ENCODE measurements at regions of chr5 and their contacts with region 1.

Region 1: DNA sequence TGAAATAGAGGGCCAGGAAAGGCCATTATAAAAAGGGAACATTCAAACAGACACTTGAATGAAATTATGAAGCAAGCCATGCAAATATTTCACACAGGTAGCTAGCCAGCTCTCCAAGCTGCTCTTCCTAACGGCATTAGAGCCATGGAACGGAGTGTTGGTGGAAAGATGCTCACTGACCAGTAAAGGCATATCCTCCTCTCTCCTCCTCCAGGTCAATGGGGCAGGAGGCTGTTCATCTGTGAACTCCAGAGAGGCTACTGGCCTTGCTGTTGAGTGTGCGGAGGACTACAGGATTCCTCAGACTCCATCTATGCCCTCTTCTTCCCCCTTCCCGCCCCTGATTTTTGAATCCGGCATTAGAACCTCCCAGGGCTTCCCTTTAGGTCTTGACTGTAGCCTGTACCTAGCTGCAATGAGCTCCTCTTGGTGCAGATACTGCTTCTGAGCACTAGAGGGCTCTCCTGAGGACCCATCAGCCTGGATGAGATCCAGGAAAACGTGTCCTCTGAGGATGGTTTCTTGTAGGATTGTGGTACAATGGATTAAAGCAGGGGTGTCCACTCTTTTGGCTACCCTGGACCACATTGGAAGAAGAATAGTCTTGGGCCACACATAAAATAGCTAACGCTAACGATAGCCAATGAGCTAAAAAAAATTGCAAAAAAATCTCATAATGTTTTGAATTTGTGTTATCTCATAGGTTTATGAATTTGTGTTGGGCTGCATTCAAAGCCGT is 162.2 kb downstream of the SREK1 start:
- DNase-seq: no peak
- H3K4me3 ChIP-seq: no peak overlapping the region
- H3K27ac ChIP-seq: no peak overlapping the region
- H3K4me1 ChIP-seq: peaks cover 0 to 11% (median 0%) of the 10 kb centered on the region in 3 donors
- H3K27me3 ChIP-seq: peaks cover 0 to 17% (median 0%) of the 10 kb centered on the region in 4 donors
- CTCF ChIP-seq: peak in 5 of 6 experiments; percentile 57 to 80 (median 63)
- POLR2A ChIP-seq: no peak

Region 2: DNA sequence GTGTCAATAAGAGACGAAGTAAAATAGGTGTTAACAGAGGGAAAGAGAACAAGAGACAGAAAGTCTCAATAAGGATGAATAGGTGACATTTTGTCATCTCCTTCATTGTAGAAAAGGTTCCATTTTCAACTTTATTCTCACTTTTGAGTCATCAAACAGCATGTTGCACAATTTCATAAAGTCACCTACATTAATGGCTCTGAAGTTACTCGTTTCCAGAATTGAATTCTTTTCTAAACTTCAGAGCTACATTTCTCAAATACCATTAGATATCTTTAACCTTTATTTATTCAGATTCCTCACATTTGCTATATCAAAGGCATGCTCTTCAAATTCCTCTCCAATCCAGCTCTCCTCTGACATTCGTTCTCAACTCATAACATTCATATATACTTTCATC is 837.6 kb before region 1 on chr5:
- intact Hi-C with region 1: no loop called
- DNase-seq: no peak
- H3K4me3 ChIP-seq: no peak overlapping the region
- H3K27ac ChIP-seq: no peak overlapping the region
- H3K4me1 ChIP-seq: no peaks in the 10 kb centered on the region
- H3K27me3 ChIP-seq: no peaks in the 10 kb centered on the region
- CTCF ChIP-seq: no peak
- POLR2A ChIP-seq: no peak

Region 3: GRCh38 chr5:66171349-66172344 is 134.6 kb before region 1 on chr5:
- intact Hi-C with region 1: loop called (anchors 10 kb)
- DNase-seq: no peak
- H3K4me3 ChIP-seq: no peak overlapping the region
- H3K27ac ChIP-seq: no peak overlapping the region
- H3K4me1 ChIP-seq: no peaks in the 10 kb centered on the region
- H3K27me3 ChIP-seq: no peaks in the 10 kb centered on the region
- CTCF ChIP-seq: peak in 5 of 6 experiments; percentile 39 to 66 (median 50)
- POLR2A ChIP-seq: no peak

Region 4: DNA sequence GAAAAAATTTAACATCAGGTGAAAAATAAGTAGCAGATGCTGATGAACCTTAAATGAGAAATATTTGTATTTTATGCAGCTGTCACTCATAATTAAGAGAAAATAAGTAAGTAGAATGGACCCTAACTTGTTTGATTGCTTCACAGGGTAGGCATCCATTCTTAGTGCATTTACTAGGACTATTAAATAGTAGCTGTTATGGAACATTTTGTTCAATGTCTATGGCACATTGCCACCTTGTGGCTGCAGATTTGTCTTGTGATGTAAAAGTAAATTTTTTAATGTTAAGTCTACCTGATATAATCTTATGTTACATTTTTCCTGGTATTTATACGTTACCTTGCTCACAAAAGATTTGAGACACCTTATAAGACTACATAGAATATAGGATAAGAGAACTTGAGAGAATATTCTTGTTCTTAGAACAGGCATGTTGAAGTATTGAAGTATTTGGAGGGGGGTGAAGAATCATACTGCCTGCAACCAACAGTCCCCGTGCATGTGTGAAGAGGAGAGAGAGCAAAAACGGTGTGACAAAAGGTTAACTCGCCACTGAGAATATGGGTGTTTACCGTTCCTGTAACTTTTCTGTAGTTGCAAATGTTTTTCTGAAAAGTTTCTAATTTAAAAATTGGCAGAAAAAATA is 451.0 kb after region 1 on chr5:
- intact Hi-C with region 1: loop called (anchors 5 kb)
- DNase-seq: no peak
- H3K4me3 ChIP-seq: no peak overlapping the region
- H3K27ac ChIP-seq: no peak overlapping the region
- H3K4me1 ChIP-seq: no peaks in the 10 kb centered on the region
- H3K27me3 ChIP-seq: peaks cover 0 to 7% (median 0%) of the 10 kb centered on the region in 4 donors
- CTCF ChIP-seq: peak in 5 of 6 experiments; percentile 20 to 52 (median 31)
- POLR2A ChIP-seq: no peak

Measured in esophagus squamous epithelium (tissue), 5 donors.